Esophagus muscularis mucosa (tissue), 4 donors: ENCODE measurements at regions of chr5 and their contacts with region 1.

Region 1: DNA sequence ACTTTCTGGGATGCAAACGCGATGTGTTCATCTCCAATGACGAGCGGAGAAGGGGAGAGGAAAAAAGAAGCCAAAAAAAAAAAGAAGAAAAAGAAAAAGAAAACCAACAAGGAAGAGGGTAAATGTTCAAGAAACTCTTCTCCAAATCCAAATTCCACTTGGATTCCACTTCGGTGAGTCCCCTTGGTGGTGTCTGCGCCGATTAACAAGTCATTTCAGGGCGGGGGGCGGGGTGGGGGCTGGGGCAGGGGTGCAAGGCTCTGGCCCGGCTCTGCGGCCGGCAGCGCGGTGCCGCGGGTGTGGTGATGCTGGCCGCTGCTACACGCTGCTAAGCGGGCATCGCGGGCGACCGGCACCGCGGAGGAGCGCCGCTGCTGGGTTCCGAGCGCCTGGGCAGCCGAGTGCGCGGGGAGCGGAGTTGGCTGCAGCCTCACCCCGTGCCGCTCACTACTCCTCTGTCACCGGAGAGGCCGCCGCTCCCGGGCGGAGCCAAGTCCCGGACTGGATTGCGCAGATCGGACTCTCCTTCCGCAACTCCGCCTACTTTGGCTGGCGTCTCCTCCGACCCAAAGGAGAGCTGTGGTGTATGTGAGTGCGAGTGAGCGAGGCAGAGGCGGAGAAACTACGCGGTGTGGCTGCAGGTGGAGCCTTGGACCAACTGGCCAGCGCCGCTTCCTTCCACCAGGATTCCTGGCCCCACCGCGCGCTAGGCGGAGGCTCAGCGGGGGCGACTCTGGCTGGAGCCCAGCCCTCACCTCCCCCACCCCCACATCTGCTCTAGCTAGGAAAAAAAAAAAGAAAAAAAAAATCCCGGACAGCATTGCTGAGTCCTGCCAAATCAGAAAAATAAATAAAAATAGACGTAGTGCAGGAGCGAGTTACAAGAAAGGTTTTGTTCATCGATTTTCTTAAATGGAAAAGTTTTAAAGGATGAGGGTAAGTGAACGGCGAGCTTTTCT is at the start of gene SEMA6A:
- DNase-seq: peak; percentile 96
- H3K4me3 ChIP-seq: peak within 1 kb of the TSS; percentile 60 to 82 (median 76)
- H3K27ac ChIP-seq: peak within 1 kb of the TSS; percentile 73 to 83 (median 76)
- H3K4me1 ChIP-seq: peaks cover 24 to 50% (median 47%) of the 10 kb centered on the region in 4 donors
- H3K27me3 ChIP-seq: peaks cover 0 to 35% (median 0%) of the 10 kb centered on the region in 4 donors
- CTCF ChIP-seq: no peak
- EP300 ChIP-seq: no peak
- POLR2A ChIP-seq: peak; percentile 33
- total RNA-seq, gene SEMA6A: 10.9 to 20.9 (median 14.3) TPM

Region 2: GRCh38 chr5:116137544-116138378 is 436.9 kb before region 1 on chr5:
- intact Hi-C with region 1: loop called (anchors 5 kb)
- DNase-seq: no peak
- H3K4me3 ChIP-seq: no peak overlapping the region
- H3K27ac ChIP-seq: no peak overlapping the region
- H3K4me1 ChIP-seq: peaks cover 0 to 8% (median 0%) of the 10 kb centered on the region in 4 donors
- H3K27me3 ChIP-seq: no peaks in the 10 kb centered on the region
- CTCF ChIP-seq: peak; percentile 56 to 75 (median 70)
- EP300 ChIP-seq: no peak
- POLR2A ChIP-seq: no peak

Region 3: DNA sequence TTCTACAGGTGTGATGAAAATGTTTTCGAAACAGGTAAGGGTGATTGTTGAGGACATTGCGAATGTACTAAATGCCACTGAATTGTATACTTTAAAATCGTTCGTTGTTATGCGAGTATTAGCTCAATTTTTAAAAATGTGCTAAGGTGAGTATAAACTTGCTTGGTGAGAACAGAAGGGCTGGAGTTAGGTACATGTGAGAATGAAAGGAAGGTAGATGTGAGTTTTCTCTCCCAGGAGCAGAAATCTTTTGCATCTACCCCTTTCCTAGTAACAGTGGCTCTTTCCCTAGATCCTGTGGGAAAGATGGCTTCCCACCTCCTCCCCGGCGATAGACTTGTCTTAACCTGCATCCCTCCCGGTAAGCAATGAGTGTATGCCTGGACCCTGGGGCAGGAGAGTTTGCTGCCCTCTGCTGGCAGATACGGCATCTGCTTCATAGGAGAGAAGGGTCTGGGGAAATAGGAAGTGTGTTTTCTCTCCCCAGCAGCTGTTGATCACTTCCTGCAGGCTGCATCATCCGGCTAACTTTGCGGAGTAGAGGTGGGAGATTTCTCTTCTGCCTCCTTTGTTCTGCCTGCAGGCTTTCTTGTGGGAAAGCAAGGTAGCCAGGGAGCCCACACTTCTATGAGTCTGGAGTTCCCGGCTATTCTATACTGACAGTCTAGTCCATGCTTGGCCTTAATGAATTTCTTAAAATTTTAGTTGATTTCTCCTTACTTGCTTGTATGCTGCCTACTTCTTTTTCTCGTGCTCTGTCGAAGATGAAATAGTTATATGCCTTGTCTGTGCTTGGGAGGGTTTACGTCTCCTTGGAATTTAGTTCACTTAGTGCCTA is 373.3 kb after region 1 on chr5:
- intact Hi-C with region 1: loop called (anchors 2 kb)
- DNase-seq: no peak
- H3K4me3 ChIP-seq: no peak overlapping the region
- H3K27ac ChIP-seq: no peak overlapping the region
- H3K4me1 ChIP-seq: no peaks in the 10 kb centered on the region
- H3K27me3 ChIP-seq: no peaks in the 10 kb centered on the region
- CTCF ChIP-seq: peak; percentile 41 to 66 (median 65)
- EP300 ChIP-seq: no peak
- POLR2A ChIP-seq: no peak

Region 4: GRCh38 chr5:117454716-117455596 is 880.3 kb after region 1 on chr5:
- intact Hi-C with region 1: loop called (anchors 10 kb)
- DNase-seq: no peak
- H3K4me3 ChIP-seq: peak overlapping the region in 1 of 4 donors; percentile 29
- H3K27ac ChIP-seq: no peak overlapping the region
- H3K4me1 ChIP-seq: peaks cover 0 to 5% (median 0%) of the 10 kb centered on the region in 4 donors
- H3K27me3 ChIP-seq: no peaks in the 10 kb centered on the region
- CTCF ChIP-seq: peak; percentile 63 to 88 (median 78)
- EP300 ChIP-seq: no peak
- POLR2A ChIP-seq: no peak